Dorsolateral prefrontal cortex (tissue), 120 donors: ENCODE measurements at regions of chr11 and their contacts with region 1.

Region 1: GRCh38 chr11:47104261-47104950 is 72.3 kb downstream of the ARFGAP2 start:
- DNase-seq: no peak
- H3K4me3 ChIP-seq: no peak overlapping the region
- H3K27ac ChIP-seq: peak overlapping the region in 47 of 59 donors; percentile 1 to 94 (median 73)
- H3K27me3 ChIP-seq: no peaks in the 10 kb centered on the region
- CTCF ChIP-seq: no peak

Region 2: GRCh38 chr11:46896719-46897406 is 207.5 kb before region 1 on chr11:
- intact Hi-C with region 1: loop called in 1 of 2 experiments (anchors 5 kb)
- DNase-seq: no peak
- H3K4me3 ChIP-seq: no peak overlapping the region
- H3K27ac ChIP-seq: peak overlapping the region in 27 of 59 donors; percentile 6 to 78 (median 53)
- H3K27me3 ChIP-seq: no peaks in the 10 kb centered on the region
- CTCF ChIP-seq: peak in 21 of 56 donors; percentile 8 to 36 (median 16)

Region 3: DNA sequence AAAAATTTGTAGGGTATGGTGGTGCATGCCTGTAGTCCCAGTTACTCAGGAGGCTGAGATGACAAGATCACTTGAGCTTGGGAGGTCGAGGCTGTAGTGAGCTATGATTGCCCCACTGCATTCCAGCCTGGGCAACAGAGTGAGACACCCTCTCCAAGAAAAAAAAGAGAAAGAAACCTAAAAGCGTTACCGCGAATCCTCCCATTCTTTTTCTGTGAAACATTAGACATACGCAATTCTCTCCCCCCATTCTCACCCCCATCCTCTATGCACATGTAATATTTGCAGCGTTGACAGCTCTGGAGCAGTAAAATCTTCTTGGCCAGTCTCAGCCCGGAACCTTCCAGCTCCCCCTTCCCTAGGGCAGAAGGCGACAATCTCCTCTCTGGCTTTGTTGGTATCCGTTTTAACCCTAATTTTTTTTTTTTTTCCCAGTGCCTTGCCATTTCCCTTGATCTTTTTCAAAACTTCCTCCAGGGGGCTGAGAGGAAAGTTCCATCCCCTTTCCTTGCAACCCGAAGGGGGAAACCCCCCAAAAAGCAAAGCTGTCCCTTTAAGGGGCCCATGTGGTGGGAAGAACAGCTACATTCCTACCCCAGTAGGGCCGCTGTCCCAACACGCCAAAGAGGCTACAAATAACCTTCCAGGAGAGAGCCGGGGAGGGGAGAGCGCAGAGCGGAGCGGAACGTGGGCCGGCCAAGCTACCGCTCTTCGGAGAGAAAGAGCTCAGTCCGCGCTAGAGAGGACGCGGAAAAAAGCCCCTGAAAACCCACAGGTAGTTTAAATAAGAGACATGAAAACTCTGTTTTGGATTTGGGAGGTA is 187.9 kb before region 1 on chr11:
- intact Hi-C with region 1: loop called in 1 of 2 experiments (anchors 5 kb)
- DNase-seq: peak in 4 of 10 donors; percentile 37 to 49 (median 44)
- H3K4me3 ChIP-seq: peak overlapping the region; percentile 51 to 86 (median 75)
- H3K27ac ChIP-seq: peak overlapping the region in 57 of 59 donors; percentile 5 to 91 (median 84)
- H3K27me3 ChIP-seq: peaks cover 0 to 13% (median 0%) of the 10 kb centered on the region in 45 donors
- CTCF ChIP-seq: peak in 25 of 56 donors; percentile 7 to 32 (median 16)

Region 4: GRCh38 chr11:46977038-46977813 is 127.2 kb before region 1 on chr11:
- intact Hi-C with region 1: loop called in 1 of 2 experiments (anchors 5 kb)
- DNase-seq: peak; percentile 20 to 81 (median 54)
- H3K4me3 ChIP-seq: peak overlapping the region in 40 of 59 donors; percentile 0 to 53 (median 21)
- H3K27ac ChIP-seq: peak overlapping the region; percentile 41 to 97 (median 88)
- H3K27me3 ChIP-seq: no peaks in the 10 kb centered on the region
- CTCF ChIP-seq: peak in 1 of 56 donors; percentile 12

Region 5: DNA sequence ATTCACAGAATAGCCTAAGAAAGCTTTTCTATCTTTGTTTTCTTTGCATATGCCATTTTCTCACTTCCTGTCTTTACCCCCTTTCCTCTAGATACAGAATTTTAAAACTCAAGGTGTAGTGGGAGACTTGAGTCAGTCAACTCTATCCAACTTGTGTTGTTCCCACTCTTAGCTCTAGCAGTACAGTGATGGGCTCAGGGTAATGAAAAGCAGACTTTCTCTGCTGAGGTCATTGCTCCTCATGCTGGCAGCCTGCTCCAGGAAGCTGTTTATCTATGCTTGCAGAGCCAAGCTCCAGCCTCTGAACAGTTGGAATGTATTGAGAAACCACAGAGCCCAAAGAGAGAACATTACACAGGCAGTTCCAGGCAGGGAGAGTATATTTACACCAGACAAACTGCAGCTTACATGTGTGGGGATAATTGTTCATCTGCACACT is 99.8 kb before region 1 on chr11:
- intact Hi-C with region 1: loop called in 1 of 2 experiments (anchors 10 kb)
- DNase-seq: peak; percentile 30 to 76 (median 66)
- H3K4me3 ChIP-seq: peak overlapping the region in 2 of 59 donors; percentile 19 to 20
- H3K27ac ChIP-seq: peak overlapping the region; percentile 8 to 93 (median 78)
- H3K27me3 ChIP-seq: no peaks in the 10 kb centered on the region
- CTCF ChIP-seq: peak in 13 of 56 donors; percentile 9 to 36 (median 19)

Region 6: DNA sequence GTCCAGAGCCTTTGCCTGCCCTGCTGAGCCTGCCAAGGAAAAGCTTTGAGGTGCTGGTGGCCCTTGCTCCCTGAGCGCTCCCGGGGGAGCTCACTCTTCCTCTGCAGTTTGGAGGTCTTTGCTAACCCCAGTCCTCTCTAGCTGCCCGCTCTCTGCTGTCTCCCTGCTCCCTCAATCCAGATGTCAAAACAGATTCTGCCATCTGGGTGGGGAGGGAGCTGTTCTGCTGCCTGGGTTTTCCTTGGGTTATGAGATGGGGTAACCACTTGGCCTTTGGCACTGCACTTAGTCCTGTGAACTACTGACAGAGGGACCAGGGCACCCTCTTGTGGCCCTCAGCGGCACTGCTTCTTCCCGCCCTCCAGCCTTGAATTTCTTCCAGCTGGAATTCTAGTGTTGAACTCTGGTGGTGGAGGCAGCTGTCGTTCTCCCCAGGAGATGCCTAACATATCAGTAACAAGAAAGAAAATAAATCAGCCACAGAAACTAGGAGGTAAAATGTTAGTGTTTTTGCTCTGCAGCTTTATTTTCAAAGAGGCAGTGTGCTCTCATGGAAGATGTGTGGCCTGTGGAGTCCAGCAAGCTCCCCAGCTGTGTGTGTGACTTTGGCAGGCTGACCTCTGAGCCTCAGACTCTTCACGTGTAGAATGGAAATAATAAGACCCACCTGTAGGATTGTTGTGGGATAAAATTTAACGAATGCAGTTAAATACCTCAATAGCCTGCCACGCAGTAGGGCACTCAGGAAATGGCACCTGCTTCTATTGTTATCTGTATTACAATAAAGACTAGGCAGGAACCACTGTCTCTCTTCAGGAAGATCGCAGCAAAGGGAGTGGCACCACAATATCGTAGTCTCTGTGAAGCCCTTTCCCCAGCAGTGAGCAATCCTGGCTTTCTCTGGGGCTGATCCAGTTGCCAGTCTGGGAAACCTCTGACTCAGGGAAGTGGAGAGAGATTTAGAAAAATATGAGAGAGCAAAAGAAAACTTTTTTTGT is 48.8 kb after region 1 on chr11:
- intact Hi-C with region 1: loop called (anchors 2 to 5 kb)
- DNase-seq: peak; percentile 78 to 93 (median 86)
- H3K4me3 ChIP-seq: no peak overlapping the region
- H3K27ac ChIP-seq: peak overlapping the region in 56 of 59 donors; percentile 6 to 88 (median 61)
- H3K27me3 ChIP-seq: no peaks in the 10 kb centered on the region
- CTCF ChIP-seq: peak; percentile 84 to 99 (median 95)

Region 7: GRCh38 chr11:47355283-47356128 is 251.1 kb after region 1 on chr11:
- intact Hi-C with region 1: no loop called
- DNase-seq: peak; percentile 88 to 94 (median 92)
- H3K4me3 ChIP-seq: peak overlapping the region; percentile 49 to 80 (median 65)
- H3K27ac ChIP-seq: peak overlapping the region in 40 of 59 donors; percentile 16 to 83 (median 62)
- H3K27me3 ChIP-seq: no peaks in the 10 kb centered on the region
- CTCF ChIP-seq: peak; percentile 36 to 98 (median 90)